A549 (cell line): ENCODE measurements at regions of chr15 and their contacts with region 1.

Region 1: GRCh38 chr15:90320061-90320884 is 31.8 kb upstream of the ZNF774 start:
- DNase-seq: peak; percentile 92 to 95
- ATAC-seq: peak; percentile 98 to 99
- H3K4me3 ChIP-seq: no peak overlapping the region
- H3K27ac ChIP-seq: peak overlapping the region; percentile 60 to 76
- H3K4me1 ChIP-seq: peaks cover 13% of the 10 kb centered on the region
- CTCF ChIP-seq: peak; percentile 99
- EP300 ChIP-seq: no peak
- POLR2A ChIP-seq: no peak
- RAD21 ChIP-seq: peak; percentile 99 to 100

Region 2: GRCh38 chr15:90184786-90185569 is 135.3 kb before region 1 on chr15:
- CTCF ChIA-PET with region 1: no interaction called
- POLR2A ChIA-PET with region 1: no interaction called
- DNase-seq: peak; percentile 91 to 95
- ATAC-seq: peak; percentile 82 to 87
- H3K4me3 ChIP-seq: peak overlapping the region; percentile 62
- H3K27ac ChIP-seq: peak overlapping the region; percentile 82 to 93
- H3K4me1 ChIP-seq: peaks cover 54% of the 10 kb centered on the region
- CTCF ChIP-seq: no peak
- EP300 ChIP-seq: peak in 1 of 2 experiments; percentile 64; a peak in 1 of 5 replicates
- POLR2A ChIP-seq: peak; percentile 8; the same call in 1 of the 2 replicates
- RAD21 ChIP-seq: peak in 1 of 2 experiments; percentile 50; a peak in 2 of 5 replicates

Region 3: DNA sequence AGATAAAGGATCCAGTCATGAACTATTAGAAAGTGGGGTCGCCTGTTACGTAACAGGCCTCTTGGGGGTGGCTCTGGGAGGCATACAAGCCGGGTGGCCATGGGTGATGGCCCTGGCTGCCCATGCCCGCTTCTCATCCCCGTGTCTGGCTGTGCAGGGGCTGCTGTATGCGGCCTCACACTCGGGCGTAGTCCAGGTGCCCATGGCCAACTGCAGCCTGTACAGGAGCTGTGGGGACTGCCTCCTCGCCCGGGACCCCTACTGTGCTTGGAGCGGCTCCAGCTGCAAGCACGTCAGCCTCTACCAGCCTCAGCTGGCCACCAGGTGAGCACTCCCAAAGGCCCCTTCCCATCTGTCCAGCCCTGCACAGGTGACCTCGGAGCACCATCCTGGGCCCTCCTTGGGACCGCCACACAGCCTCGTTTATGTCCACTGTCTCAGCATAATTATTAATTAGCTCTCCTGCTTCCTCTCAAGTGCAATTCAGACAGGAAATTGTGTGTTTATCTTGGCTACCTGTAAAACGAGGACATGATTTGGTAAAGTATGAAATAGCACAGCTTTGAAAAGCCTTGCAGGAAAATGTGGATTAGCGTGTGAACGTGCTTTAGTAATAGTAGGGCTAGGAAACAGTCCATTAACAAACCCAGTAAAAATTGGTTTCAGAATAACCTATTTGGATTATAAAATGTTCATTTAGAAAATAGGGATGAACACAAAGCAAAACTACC is 94.6 kb before region 1 on chr15:
- CTCF ChIA-PET with region 1: no interaction called
- POLR2A ChIA-PET with region 1: no interaction called
- DNase-seq: no peak
- ATAC-seq: no peak
- H3K4me3 ChIP-seq: no peak overlapping the region
- H3K27ac ChIP-seq: no peak overlapping the region
- H3K4me1 ChIP-seq: peaks cover 13% of the 10 kb centered on the region
- CTCF ChIP-seq: no peak
- EP300 ChIP-seq: no peak
- POLR2A ChIP-seq: no peak
- RAD21 ChIP-seq: no peak

Region 4: DNA sequence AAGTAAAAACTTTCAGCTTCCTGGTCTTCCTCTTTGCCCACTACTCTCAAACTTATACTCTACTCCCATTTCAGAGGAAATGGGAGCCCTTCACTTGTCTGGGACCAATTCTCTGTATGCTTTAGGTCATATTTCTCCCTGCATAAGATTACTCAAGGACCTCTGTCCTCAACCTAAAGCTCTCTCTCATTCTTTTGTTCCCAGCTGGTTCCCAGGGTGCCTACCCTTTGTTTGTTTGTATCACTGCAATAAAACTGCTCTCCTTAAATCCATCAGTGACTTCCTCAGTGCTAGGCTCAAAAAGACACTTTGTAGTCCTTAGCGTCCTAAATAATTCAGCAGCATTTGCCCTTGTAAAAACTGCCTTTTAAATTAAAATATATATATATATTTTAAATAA is 51.9 kb before region 1 on chr15:
- CTCF ChIA-PET with region 1: no interaction called
- POLR2A ChIA-PET with region 1: no interaction called
- DNase-seq: no peak
- ATAC-seq: no peak
- H3K4me3 ChIP-seq: no peak overlapping the region
- H3K27ac ChIP-seq: no peak overlapping the region
- H3K4me1 ChIP-seq: peaks cover 31% of the 10 kb centered on the region
- CTCF ChIP-seq: no peak
- EP300 ChIP-seq: no peak
- POLR2A ChIP-seq: no peak
- RAD21 ChIP-seq: no peak

Region 5: DNA sequence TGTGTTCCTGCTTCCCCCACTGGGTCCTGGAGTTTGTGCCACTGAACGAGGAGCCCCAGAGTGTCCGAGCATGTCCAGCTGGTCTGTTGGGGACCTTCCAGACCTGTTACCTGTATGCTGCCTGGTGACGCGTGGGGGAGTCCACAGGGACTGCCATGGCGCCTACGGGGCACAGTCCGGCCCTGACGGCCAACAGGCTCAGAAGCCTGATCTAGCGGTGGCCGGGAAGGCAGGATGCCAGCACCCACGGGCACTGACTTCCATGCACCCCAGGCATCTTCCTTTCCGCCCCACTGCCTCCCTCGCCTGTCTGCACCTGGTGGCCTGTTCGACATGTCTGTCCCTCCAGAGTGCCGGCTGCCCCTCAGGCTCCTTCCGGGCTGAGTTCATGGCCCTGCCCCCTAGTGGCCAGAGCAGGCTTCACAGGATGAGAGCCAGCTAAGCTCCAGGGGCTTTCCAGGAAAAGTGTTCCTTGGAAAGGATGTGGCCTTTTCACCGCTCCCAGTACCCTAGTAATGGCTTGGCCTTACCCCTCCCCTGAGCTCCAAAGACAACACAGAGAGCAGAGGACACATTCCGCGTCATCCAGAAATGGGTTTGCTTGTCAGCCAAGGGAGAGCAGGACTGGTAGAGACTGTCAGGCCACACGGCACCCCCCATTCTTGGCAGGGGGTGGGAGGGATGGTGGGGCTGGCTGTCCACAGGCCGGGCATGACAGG is 19.1 kb before region 1 on chr15:
- CTCF ChIA-PET with region 1: interaction called, 65 read pairs
- POLR2A ChIA-PET with region 1: no interaction called
- DNase-seq: peak; percentile 62 to 84
- ATAC-seq: peak; percentile 84 to 97
- H3K4me3 ChIP-seq: no peak overlapping the region
- H3K27ac ChIP-seq: peak overlapping the region; percentile 23 to 71; a peak in 4 of 6 replicates
- H3K4me1 ChIP-seq: no peaks in the 10 kb centered on the region
- CTCF ChIP-seq: peak; percentile 81
- EP300 ChIP-seq: no peak
- POLR2A ChIP-seq: no peak
- RAD21 ChIP-seq: peak; percentile 44 to 64; a peak in 4 of 5 replicates

Region 6: DNA sequence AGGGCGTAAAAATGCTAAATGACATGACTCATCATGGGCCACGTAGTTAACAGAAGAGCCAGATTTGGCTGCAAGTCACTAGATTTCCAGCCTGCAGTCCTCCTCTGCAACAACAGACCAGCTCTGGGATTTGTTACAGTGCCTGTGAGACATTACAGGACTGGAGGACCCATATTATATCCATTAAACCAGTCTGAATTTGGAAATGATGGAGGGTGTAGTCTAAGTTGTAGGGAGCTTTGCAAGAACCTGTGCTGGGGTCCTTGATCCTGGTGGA is 42.6 kb after region 1 on chr15:
- CTCF ChIA-PET with region 1: interaction called, 94 read pairs
- POLR2A ChIA-PET with region 1: no interaction called
- DNase-seq: no peak
- ATAC-seq: peak in 1 of 2 experiments; percentile 44; a peak in 3 of 6 replicates
- H3K4me3 ChIP-seq: no peak overlapping the region
- H3K27ac ChIP-seq: peak overlapping the region; percentile 31 to 73; a peak in 5 of 6 replicates
- H3K4me1 ChIP-seq: peaks cover 39% of the 10 kb centered on the region
- CTCF ChIP-seq: no peak
- EP300 ChIP-seq: no peak
- POLR2A ChIP-seq: no peak
- RAD21 ChIP-seq: no peak

Region 7: GRCh38 chr15:90400406-90401314 is 80.4 kb after region 1 on chr15:
- CTCF ChIA-PET with region 1: interaction called, 22 read pairs
- POLR2A ChIA-PET with region 1: no interaction called
- DNase-seq: peak; percentile 94
- ATAC-seq: peak; percentile 97 to 98
- H3K4me3 ChIP-seq: peak overlapping the region; percentile 25; the same call in 2 of the 3 replicates
- H3K27ac ChIP-seq: peak overlapping the region; percentile 76 to 84
- H3K4me1 ChIP-seq: peaks cover 63% of the 10 kb centered on the region
- CTCF ChIP-seq: no peak
- EP300 ChIP-seq: no peak
- POLR2A ChIP-seq: no peak
- RAD21 ChIP-seq: 0 out of 5 replicates have a peak, but pooled peaks of 1 of the 2 experiments have one; percentile 18

Region 8: DNA sequence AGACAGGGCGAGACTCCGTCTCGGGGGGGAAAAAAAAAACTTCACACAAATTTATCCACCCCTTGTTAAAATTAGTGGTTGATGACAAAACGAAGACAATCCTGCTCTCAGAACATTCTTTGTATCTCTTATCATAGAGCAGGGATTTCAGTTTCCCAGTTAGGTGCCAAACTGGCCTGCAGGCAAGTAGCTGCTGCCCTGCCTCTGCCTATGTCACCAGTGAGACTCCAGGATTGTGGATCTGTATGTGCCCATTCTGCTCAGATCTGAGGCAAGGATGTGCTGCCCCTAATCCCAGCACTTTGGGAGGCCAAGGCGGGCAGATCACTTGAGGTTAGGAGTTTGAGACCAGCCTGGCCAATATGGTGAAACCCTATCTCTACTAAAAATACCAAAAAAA is 122.2 kb after region 1 on chr15:
- CTCF ChIA-PET with region 1: interaction called, 44 read pairs
- POLR2A ChIA-PET with region 1: no interaction called
- DNase-seq: no peak
- ATAC-seq: no peak
- H3K4me3 ChIP-seq: no peak overlapping the region
- H3K27ac ChIP-seq: no peak overlapping the region
- H3K4me1 ChIP-seq: no peaks in the 10 kb centered on the region
- CTCF ChIP-seq: no peak
- EP300 ChIP-seq: no peak
- POLR2A ChIP-seq: no peak
- RAD21 ChIP-seq: no peak

Region 9: GRCh38 chr15:90512981-90513380 is 192.7 kb after region 1 on chr15:
- CTCF ChIA-PET with region 1: interaction called, 17 read pairs
- POLR2A ChIA-PET with region 1: no interaction called
- DNase-seq: no peak
- ATAC-seq: peak in 1 of 2 experiments; percentile 40; a peak in 2 of 6 replicates
- H3K4me3 ChIP-seq: no peak overlapping the region
- H3K27ac ChIP-seq: no peak overlapping the region
- H3K4me1 ChIP-seq: peaks cover 6% of the 10 kb centered on the region
- CTCF ChIP-seq: no peak
- EP300 ChIP-seq: no peak
- POLR2A ChIP-seq: no peak
- RAD21 ChIP-seq: no peak

Region 10: DNA sequence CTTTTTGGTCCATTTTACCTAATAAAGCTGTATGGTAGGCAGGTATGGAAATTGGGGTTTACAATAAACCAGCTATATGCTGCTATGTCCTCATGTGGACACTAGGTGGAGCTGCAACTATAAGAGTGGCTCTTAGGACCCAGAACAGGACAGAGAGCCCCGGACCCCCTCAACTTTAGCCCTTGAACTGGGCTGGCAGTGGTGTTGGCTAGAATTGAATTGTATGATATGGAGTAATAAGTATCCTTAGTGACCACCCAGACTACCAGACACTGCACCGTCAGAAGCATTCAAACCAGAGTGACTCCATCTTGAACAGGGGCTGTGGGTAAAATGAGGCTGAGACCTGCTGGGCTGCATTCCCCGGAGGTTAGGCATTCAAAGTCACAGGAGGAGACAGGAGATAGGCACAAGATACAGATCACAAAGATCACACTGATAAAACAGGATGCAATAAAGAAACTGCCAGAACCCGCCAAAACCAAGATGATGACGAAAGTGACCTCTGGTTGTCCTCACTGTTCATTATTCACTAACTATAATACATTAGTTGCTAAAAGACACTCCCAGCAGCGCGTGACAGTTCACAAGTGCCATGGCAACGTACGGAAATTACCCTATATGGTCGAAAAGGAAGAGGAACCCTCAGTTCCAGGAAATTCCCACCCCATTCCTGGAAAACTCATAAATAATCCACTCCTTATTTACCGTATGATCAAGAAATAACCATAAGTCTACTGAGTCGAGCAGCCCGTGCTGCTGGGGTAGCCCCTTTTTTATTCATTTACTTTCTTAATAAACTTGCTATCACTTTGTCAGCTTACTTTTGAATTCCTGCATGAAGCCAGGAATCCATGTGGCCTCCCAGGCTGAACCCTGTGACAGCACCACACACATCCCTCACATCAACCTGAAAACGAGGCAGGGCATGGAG is 328.1 kb after region 1 on chr15:
- CTCF ChIA-PET with region 1: interaction called, 12 read pairs
- POLR2A ChIA-PET with region 1: interaction called, 3 read pairs
- DNase-seq: peak; percentile 77 to 78
- ATAC-seq: peak; percentile 32 to 72; a peak in 3 of 6 replicates
- H3K4me3 ChIP-seq: no peak overlapping the region
- H3K27ac ChIP-seq: no peak overlapping the region
- H3K4me1 ChIP-seq: peaks cover 13% of the 10 kb centered on the region; the same call in 2 of the 3 replicates
- CTCF ChIP-seq: peak; percentile 98
- EP300 ChIP-seq: no peak
- POLR2A ChIP-seq: no peak
- RAD21 ChIP-seq: peak; percentile 96 to 97